Tibial artery (tissue), 4 donors: ENCODE measurements at regions of chr4 and their contacts with region 1.

Region 1: GRCh38 chr4:80184053-80184790 is 13.1 kb upstream of the PRDM8 start:
- DNase-seq: peak; percentile 84 to 88
- H3K4me3 ChIP-seq: peak overlapping the region; percentile 67 to 86
- H3K27ac ChIP-seq: peak overlapping the region; percentile 74 to 81
- H3K4me1 ChIP-seq: peaks cover 0 to 50% (median 29%) of the 10 kb centered on the region in 4 donors
- H3K27me3 ChIP-seq: peaks cover 0 to 19% of the 10 kb centered on the region in 2 donors
- CTCF ChIP-seq: peak; percentile 78 to 90

Region 2: GRCh38 chr4:79831701-79832514 is 352.3 kb before region 1 on chr4:
- intact Hi-C with region 1: no loop called
- DNase-seq: no peak
- H3K4me3 ChIP-seq: no peak overlapping the region
- H3K27ac ChIP-seq: no peak overlapping the region
- H3K4me1 ChIP-seq: peaks cover 0 to 17% (median 0%) of the 10 kb centered on the region in 4 donors
- H3K27me3 ChIP-seq: no peaks in the 10 kb centered on the region
- CTCF ChIP-seq: no peak

Region 3: GRCh38 chr4:80072744-80073472 is 111.3 kb before region 1 on chr4 and contains the start of gene ANTXR2:
- intact Hi-C with region 1: loop called (anchors 10 kb)
- DNase-seq: peak; percentile 92 to 97
- H3K4me3 ChIP-seq: peak within 1 kb of the TSS; percentile 88 to 94
- H3K27ac ChIP-seq: peak within 1 kb of the TSS; percentile 88 to 92
- H3K4me1 ChIP-seq: peaks cover 0 to 36% (median 11%) of the 10 kb centered on the region in 4 donors
- H3K27me3 ChIP-seq: no peaks in the 10 kb centered on the region
- CTCF ChIP-seq: no peak